Heart right ventricle (tissue), 16 donors: ENCODE measurements at regions of chr22 and their contacts with region 1.

Region 1: GRCh38 chr22:49305214-49305909 is 522.3 kb downstream of the BRD1 start:
- DNase-seq: peak; percentile 46 to 73
- ATAC-seq: peak; percentile 71 to 84 (median 80)
- H3K4me3 ChIP-seq: no peak overlapping the region
- H3K27ac ChIP-seq: no peak overlapping the region
- H3K4me1 ChIP-seq: no peaks in the 10 kb centered on the region
- H3K27me3 ChIP-seq: peaks cover 0 to 74% (median 54%) of the 10 kb centered on the region in 7 donors
- CTCF ChIP-seq: peak; percentile 87 to 96 (median 93)

Region 2: DNA sequence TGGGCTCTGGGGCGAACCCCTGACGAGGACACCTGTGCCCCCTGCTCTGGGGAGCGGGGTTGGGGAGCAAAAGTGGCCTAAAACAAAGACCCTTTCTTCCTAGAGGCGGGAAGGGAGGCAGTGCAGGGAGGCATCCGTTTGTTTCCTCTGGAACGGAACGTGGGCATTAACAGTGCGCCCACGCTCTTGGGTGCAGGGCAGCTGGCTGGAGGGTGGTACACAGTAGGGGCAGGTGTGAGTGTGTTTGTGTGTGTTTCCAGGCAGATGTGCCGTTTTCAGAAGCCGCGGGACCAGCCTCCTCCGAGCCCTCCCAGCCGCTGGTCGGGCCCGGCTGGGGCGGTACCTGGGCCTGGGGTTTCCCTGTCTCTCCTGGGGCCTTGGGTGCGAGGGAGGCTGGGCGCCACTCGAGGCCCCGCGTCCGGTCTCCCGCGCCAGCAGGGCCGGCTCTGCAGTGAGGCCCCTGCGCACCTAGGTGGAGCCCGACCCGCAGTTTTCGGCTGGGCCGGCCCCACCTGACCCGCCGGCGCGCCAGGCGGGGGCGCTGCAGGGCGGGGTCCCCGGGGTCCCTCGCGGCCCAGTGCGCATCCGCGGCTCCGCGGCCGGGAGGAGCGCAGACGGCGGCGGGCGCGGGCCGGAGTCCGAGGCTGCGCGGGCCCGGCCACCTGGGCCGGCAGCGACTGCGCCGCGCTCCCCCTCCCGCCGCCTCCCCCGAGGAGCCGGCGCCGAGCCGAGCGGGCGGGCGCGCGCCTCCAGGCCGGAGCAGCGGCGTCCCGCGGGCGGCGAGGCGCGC is 730.4 kb before region 1 on chr22:
- intact Hi-C with region 1: loop called in 9 of 10 experiments (anchors 5 to 10 kb)
- DNase-seq: peak in 1 of 2 donors; percentile 19
- ATAC-seq: peak; percentile 40 to 77 (median 64)
- H3K4me3 ChIP-seq: no peak overlapping the region
- H3K27ac ChIP-seq: no peak overlapping the region
- H3K4me1 ChIP-seq: no peaks in the 10 kb centered on the region
- H3K27me3 ChIP-seq: peaks cover 0 to 59% (median 51%) of the 10 kb centered on the region in 7 donors
- CTCF ChIP-seq: peak in 6 of 9 donors; percentile 19 to 50 (median 38)

Region 3: DNA sequence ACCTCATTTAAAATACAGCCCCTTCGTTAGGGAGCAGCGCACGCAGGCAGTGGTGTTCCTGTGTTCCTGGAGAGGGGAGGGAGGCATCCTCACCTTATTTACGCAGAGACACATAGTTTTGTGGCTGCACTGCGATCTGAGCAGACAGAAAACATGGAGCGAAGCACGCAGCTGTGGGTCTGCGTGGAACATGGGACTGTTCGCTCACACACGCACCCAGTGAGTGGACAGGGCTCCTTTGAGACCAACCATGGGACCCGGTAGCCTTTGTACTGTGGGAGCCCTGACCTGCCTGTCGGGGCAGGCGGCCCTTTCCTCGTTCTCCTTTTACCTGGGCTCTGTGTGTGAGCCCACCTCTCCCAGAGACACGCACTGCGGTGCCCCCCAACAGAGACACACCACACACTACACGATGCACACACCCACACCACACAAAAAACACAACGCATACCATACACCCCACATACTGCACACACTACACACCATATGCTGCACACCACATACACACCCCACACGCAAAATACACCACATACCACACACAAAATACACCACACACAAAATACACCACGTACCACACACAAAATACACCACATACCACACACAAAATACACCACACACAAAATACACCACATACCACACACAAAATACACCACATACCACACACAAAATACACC is 723.4 kb before region 1 on chr22:
- intact Hi-C with region 1: loop called in 9 of 10 experiments (anchors 5 to 10 kb)
- DNase-seq: no peak
- ATAC-seq: no peak
- H3K4me3 ChIP-seq: no peak overlapping the region
- H3K27ac ChIP-seq: no peak overlapping the region
- H3K4me1 ChIP-seq: no peaks in the 10 kb centered on the region
- H3K27me3 ChIP-seq: peaks cover 4 to 55% (median 39%) of the 10 kb centered on the region in 7 donors
- CTCF ChIP-seq: no peak

Region 4: GRCh38 chr22:48943567-48944432 is 361.6 kb before region 1 on chr22:
- intact Hi-C with region 1: loop called in 1 of 10 experiments (anchors 10 kb)
- DNase-seq: no peak
- ATAC-seq: peak in 6 of 8 donors; percentile 20 to 73 (median 34)
- H3K4me3 ChIP-seq: no peak overlapping the region
- H3K27ac ChIP-seq: no peak overlapping the region
- H3K4me1 ChIP-seq: no peaks in the 10 kb centered on the region
- H3K27me3 ChIP-seq: peaks cover 0 to 18% (median 5%) of the 10 kb centered on the region in 7 donors
- CTCF ChIP-seq: peak in 8 of 9 donors; percentile 19 to 54 (median 47)

Region 5: DNA sequence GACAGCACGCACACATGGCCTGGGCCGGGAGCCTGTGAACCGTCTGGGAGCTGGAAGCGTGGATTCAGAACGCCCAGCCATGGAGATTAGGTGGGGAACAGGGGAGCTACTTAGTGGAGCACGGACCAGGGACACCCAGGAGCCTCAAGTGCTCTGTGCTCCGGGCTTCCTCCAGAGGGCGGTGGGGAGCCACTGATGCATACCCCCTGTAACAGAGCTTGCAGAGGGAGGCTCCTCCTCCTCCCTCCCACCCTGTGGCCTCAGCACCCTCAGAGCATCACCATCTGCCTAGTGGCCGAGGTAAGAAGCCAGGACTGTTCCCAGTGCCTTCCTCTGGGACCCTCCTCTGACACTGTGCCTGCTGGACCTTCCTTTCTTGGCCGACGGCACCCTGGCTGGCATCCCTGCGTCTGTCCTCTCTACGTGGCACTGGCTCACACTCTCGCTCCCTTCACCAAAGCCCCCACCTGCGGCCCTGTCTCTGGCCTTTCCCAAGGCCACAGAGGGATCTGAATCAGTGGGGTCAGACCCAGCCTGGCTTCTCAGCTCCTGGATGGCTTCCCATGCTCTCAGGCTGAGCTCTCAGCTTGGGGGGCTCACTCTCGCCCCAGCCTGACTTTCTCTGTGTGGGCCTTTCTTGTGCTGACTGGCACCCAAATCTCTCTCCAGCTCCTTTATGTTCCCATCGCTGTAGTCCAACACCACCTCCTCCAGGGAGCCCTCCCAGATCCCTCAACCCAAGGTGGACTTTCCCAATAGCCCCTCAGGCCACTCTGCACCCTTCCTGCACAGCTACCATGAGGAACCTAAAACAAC is 258.6 kb before region 1 on chr22:
- intact Hi-C with region 1: loop called in 9 of 10 experiments (anchors 2 to 10 kb)
- DNase-seq: peak; percentile 24 to 42
- ATAC-seq: peak in 7 of 8 donors; percentile 47 to 75 (median 70)
- H3K4me3 ChIP-seq: no peak overlapping the region
- H3K27ac ChIP-seq: no peak overlapping the region
- H3K4me1 ChIP-seq: no peaks in the 10 kb centered on the region
- H3K27me3 ChIP-seq: peaks cover 0 to 70% (median 29%) of the 10 kb centered on the region in 7 donors
- CTCF ChIP-seq: peak; percentile 10 to 58 (median 48)

Region 6: GRCh38 chr22:49354516-49355210 is 49.3 kb after region 1 on chr22:
- intact Hi-C with region 1: no loop called
- DNase-seq: no peak
- ATAC-seq: no peak
- H3K4me3 ChIP-seq: no peak overlapping the region
- H3K27ac ChIP-seq: no peak overlapping the region
- H3K4me1 ChIP-seq: no peaks in the 10 kb centered on the region
- H3K27me3 ChIP-seq: peaks cover 0 to 58% (median 31%) of the 10 kb centered on the region in 7 donors
- CTCF ChIP-seq: no peak

Region 7: DNA sequence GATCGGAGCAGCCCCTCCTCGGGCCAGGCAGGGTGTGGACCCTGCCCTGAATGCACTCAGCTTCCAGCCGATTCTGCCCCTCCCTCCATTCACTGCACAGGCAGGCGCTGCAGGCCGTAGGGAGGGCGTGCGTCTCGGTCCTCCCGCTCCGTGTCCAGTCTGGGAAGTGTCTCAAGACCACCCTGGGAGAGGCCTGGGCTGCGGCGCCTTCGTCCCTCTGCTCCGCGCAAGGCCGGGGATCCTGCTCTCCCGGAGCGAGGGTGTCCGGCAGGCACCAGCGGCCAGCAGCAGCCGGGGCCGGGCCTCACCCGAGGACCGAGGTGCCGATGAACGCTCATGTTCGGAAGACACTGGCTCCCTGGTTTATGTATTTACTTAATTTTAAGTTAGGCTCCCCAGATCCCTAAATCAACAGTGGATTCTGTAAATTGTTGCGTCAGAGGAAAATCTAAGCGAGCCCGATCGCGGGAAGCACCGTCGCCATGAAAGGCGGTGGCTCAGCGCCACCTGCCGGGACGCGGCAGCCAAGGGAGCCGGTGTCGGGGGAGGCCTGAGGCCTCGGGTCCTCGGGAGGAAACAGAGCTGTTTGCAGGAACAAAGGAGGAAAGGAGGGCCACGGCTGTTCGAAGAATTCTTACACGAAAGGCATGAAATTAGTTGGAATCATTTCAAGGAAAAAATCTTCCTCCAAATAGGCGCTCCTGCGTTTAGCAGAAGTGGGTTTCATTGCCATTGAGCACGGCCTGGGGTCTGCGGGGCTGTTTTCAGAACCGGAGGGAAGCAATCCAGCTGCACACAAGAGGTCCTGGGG is 327.0 kb after region 1 on chr22:
- intact Hi-C with region 1: loop called in 1 of 10 experiments (anchors 10 kb)
- DNase-seq: peak; percentile 62 to 68
- ATAC-seq: peak; percentile 57 to 88 (median 83)
- H3K4me3 ChIP-seq: peak overlapping the region in 9 of 10 donors; percentile 25 to 57 (median 43)
- H3K27ac ChIP-seq: peak overlapping the region in 5 of 10 donors; percentile 3 to 48 (median 19)
- H3K4me1 ChIP-seq: peaks cover 4 to 14% (median 11%) of the 10 kb centered on the region in 9 donors
- H3K27me3 ChIP-seq: peaks cover 0 to 8% (median 0%) of the 10 kb centered on the region in 7 donors
- CTCF ChIP-seq: peak; percentile 60 to 93 (median 82)